ENCODE measurements at regions of chr17 and their contacts with region 1.

Region 1: DNA sequence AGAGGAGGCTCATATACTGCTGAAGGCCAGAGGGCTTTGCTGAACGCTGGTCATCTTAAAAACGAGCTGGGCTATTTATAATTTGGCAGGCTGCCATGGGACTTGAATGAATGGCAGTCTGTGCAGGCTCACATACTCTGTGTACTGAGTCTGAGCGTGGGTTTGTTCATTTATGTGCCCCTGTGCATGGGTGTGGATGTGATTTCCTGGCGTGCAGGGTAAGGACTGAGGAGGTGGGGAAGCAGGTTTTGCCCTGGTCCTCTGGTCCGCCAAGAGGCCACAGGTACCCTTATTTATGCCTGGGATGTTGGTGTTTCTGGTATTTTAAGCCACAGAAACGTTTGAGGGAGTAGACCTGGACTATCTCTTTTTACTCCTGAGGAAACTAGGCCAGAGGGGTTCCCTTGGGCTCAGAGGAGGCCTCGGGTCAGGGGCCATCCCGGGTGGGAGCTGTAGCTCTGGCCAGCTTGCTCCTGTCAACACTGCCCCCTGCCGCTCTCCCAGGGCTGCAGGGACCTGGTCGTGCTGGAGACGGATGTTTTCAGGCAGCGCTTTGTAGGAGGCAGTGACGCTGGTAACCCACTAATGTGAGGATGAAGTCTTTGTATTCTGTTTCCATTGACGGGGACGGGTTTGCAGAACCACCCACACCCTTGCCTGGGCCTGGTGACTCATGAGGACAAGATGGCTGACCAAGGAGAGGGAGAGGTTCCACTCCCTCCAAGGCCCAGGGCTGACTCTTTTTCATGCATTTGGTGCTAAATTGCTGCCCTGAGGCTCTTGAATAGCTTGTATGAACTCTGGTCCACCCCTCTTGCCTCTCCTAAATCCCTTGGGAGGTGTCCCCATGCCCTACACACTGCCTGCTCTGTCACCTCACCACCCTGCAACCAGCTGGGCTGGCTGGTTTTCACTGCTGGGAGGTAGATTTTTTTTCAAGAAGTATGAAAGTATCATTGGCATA is 184.5 kb downstream of the MSI2 start:
- DNase-seq: peak; percentile 89
- H3K4me3 ChIP-seq: no peak overlapping the region
- H3K27ac ChIP-seq: peak overlapping the region; percentile 85
- H3K4me1 ChIP-seq: peaks cover 52% of the 10 kb centered on the region
- H3K27me3 ChIP-seq: no peaks in the 10 kb centered on the region
- CTCF ChIP-seq: peak; percentile 54 to 60

Region 2: GRCh38 chr17:57243171-57243948 is 197.4 kb before region 1 on chr17:
- CTCF ChIA-PET with region 1: interaction called, 3 read pairs
- dilution Hi-C with region 1: no loop called
- in situ Hi-C with region 1: no loop called
- intact Hi-C with region 1: loop called (anchors 5 kb)
- DNase-seq: peak; percentile 45
- H3K4me3 ChIP-seq: no peak overlapping the region
- H3K27ac ChIP-seq: no peak overlapping the region
- H3K4me1 ChIP-seq: no peaks in the 10 kb centered on the region
- H3K27me3 ChIP-seq: no peaks in the 10 kb centered on the region
- CTCF ChIP-seq: peak; percentile 100

Region 3: DNA sequence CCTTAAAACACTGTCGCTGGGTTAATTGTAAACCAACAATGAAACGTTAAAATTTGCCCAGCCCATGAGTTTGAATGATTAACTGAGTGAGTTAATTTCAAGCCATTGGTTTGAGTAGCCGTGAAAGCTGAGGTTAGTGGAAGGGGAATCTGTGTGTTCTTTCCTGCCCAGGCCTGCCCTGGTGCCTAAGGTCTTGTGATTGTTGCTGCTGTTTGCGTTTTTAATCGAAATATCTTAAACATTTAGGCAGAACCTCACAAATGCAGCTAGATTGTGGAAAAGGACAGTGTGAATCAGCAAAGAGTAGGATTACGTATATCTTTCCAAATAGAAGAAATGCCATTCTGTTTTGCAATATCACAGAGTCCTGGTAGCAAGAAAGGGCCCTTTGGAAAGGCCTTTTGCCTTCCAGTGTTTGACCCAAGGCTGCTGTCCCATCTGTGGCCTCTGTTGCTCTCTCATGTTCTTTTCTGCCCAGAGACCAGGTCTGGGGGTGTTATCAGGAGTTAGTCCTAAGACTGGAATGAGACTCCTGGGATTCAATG is 70.7 kb before region 1 on chr17:
- CTCF ChIA-PET with region 1: no interaction called
- dilution Hi-C with region 1: no loop called
- in situ Hi-C with region 1: no loop called
- intact Hi-C with region 1: loop called (anchors 5 kb)
- DNase-seq: peak; percentile 94
- H3K4me3 ChIP-seq: no peak overlapping the region
- H3K27ac ChIP-seq: peak overlapping the region; percentile 88
- H3K4me1 ChIP-seq: peaks cover 45% of the 10 kb centered on the region
- H3K27me3 ChIP-seq: no peaks in the 10 kb centered on the region
- CTCF ChIP-seq: no peak

Region 4: DNA sequence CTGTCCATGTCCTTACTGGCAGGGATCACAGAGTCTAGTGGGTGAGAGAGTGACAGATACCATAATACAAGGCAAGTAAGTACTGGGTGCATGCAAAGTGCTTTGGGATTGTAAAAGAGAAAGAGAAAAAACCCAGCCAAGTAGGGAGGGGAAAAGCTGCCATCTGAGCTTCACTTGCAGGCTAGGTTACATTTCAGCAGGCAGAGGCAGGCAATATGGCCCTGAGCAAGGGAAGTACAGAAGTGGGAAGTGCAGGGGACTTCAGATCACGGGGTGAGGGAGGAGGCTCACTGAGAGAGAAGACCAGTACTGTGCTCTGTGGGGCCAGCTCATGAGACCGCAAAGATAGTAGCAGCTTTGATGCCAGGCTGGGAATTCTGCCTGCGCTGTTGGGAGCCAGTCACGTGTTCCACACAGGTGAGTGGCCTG is 46.1 kb after region 1 on chr17:
- CTCF ChIA-PET with region 1: no interaction called
- dilution Hi-C with region 1: loop called (anchors 5 kb)
- in situ Hi-C with region 1: no loop called
- intact Hi-C with region 1: no loop called
- DNase-seq: peak; percentile 33
- H3K4me3 ChIP-seq: no peak overlapping the region
- H3K27ac ChIP-seq: no peak overlapping the region
- H3K4me1 ChIP-seq: no peaks in the 10 kb centered on the region
- H3K27me3 ChIP-seq: no peaks in the 10 kb centered on the region
- CTCF ChIP-seq: no peak

Region 5: GRCh38 chr17:57518587-57519581 is 78.1 kb after region 1 on chr17:
- CTCF ChIA-PET with region 1: no interaction called
- dilution Hi-C with region 1: no loop called
- in situ Hi-C with region 1: loop called in 1 of 2 experiments (anchors 10 kb)
- intact Hi-C with region 1: no loop called
- DNase-seq: peak; percentile 17
- H3K4me3 ChIP-seq: no peak overlapping the region
- H3K27ac ChIP-seq: no peak overlapping the region
- H3K4me1 ChIP-seq: peaks cover 31% of the 10 kb centered on the region
- H3K27me3 ChIP-seq: no peaks in the 10 kb centered on the region
- CTCF ChIP-seq: no peak

Measured in mammary epithelial cell (primary cell).